ENCODE measurements at regions of chr10 and their contacts with region 1.

Region 1: GRCh38 chr10:24118246-24118645 is 90.7 kb upstream of the KIAA1217 start:
- DNase-seq: no peak
- ATAC-seq: peak in 1 of 4 donors; percentile 15
- H3K4me3 ChIP-seq: peak overlapping the region; percentile 38
- H3K27ac ChIP-seq: peak overlapping the region; percentile 92
- H3K4me1 ChIP-seq: peaks cover 42% of the 10 kb centered on the region
- H3K27me3 ChIP-seq: no peaks in the 10 kb centered on the region
- CTCF ChIP-seq: no peak

Region 2: GRCh38 chr10:23994479-23995046 is 123.7 kb before region 1 on chr10:
- intact Hi-C with region 1: loop called in 1 of 2 experiments (anchors 5 kb)
- DNase-seq: peak; percentile 33 to 67
- ATAC-seq: peak; percentile 83 to 95 (median 90)
- H3K4me3 ChIP-seq: no peak overlapping the region
- H3K27ac ChIP-seq: no peak overlapping the region
- H3K4me1 ChIP-seq: peaks cover 6% of the 10 kb centered on the region
- H3K27me3 ChIP-seq: no peaks in the 10 kb centered on the region
- CTCF ChIP-seq: peak; percentile 93

Region 3: GRCh38 chr10:24041034-24041433 is 77.2 kb before region 1 on chr10:
- intact Hi-C with region 1: loop called in 1 of 2 experiments (anchors 5 kb)
- DNase-seq: no peak
- ATAC-seq: no peak
- H3K4me3 ChIP-seq: no peak overlapping the region
- H3K27ac ChIP-seq: peak overlapping the region; percentile 84
- H3K4me1 ChIP-seq: peaks cover 38% of the 10 kb centered on the region
- H3K27me3 ChIP-seq: no peaks in the 10 kb centered on the region
- CTCF ChIP-seq: no peak

Region 4: GRCh38 chr10:24201503-24202180 is 83.4 kb after region 1 on chr10:
- intact Hi-C with region 1: loop called (anchors 5 kb)
- DNase-seq: no peak
- ATAC-seq: no peak
- H3K4me3 ChIP-seq: no peak overlapping the region
- H3K27ac ChIP-seq: no peak overlapping the region
- H3K4me1 ChIP-seq: peaks cover 25% of the 10 kb centered on the region
- H3K27me3 ChIP-seq: no peaks in the 10 kb centered on the region
- CTCF ChIP-seq: no peak

Measured in psoas muscle (tissue), 8 donors.